ENCODE measurements at regions of chr3 and their contacts with region 1.

Region 1: GRCh38 chr3:186821429-186822367 is 15.4 kb upstream of the RFC4 start:
- DNase-seq: peak; percentile 61
- H3K4me3 ChIP-seq: peak overlapping the region in 2 of 3 experiments; percentile 21 to 58
- H3K27ac ChIP-seq: no peak overlapping the region
- H3K4me1 ChIP-seq: peaks cover 9% of the 10 kb centered on the region
- H3K27me3 ChIP-seq: no peaks in the 10 kb centered on the region
- CTCF ChIP-seq: peak; percentile 52 to 63
- POLR2A ChIP-seq: no peak

Region 2: GRCh38 chr3:186570096-186570940 is 251.4 kb before region 1 on chr3 and contains the start of gene DNAJB11:
- CTCF ChIA-PET with region 1: interaction called, 5 read pairs
- POLR2A ChIA-PET with region 1: no interaction called
- dilution Hi-C with region 1: no loop called
- intact Hi-C with region 1: loop called (anchors 5 kb)
- DNase-seq: peak; percentile 100
- H3K4me3 ChIP-seq: peak within 1 kb of the TSS; percentile 80 to 91 (median 90)
- H3K27ac ChIP-seq: peak within 1 kb of the TSS; percentile 67
- H3K4me1 ChIP-seq: peaks cover 18% of the 10 kb centered on the region
- H3K27me3 ChIP-seq: no peaks in the 10 kb centered on the region
- CTCF ChIP-seq: no peak
- POLR2A ChIP-seq: peak; percentile 87
- total RNA-seq, gene DNAJB11: 87.6 and 100 TPM in 2 replicates

Region 3: DNA sequence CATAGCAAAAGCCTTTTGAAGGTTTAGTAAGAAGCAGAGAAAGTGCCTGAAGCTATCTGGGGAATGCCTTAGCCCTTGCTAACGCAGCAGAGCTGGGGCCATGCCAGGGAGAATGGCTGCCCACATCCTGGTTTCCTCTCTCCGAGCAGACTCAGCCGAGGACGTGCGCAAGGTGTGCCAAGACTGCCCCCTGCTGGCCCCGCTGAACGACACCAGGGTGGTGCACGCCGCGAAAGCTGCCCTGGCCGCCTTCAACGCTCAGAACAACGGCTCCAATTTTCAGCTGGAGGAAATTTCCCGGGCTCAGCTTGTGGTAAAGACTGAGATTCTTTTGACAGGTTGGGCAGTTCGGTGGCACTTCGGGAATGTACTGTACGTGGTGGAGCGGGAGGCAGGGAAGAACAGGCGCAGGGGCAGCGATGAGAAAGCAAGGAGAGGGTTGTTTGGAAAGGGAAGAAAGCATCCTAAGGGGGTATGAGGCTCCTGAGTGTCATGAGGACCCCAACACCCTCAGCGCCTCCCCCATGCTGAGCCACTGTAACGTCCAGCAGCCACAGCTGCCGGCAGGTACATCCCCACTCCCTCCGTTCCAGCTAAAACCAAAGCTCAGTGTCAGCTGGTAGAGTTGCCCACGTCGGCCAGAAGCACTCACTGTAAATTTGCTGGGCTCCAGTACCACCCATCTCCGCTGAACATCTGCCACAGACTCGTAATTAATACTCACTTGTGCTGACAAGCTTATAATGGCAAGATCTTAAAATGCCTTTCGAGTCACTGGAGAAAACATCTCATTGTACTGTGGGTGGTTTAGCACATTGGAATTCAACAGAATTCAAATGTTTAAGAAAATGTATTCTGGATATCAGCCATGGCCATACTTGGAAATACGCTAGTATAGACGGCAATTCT is 204.4 kb before region 1 on chr3:
- CTCF ChIA-PET with region 1: interaction called, 195 read pairs
- POLR2A ChIA-PET with region 1: no interaction called
- dilution Hi-C with region 1: no loop called
- intact Hi-C with region 1: loop called (anchors 1 kb)
- DNase-seq: peak; percentile 83
- H3K4me3 ChIP-seq: no peak overlapping the region
- H3K27ac ChIP-seq: no peak overlapping the region
- H3K4me1 ChIP-seq: peaks cover 5% of the 10 kb centered on the region
- H3K27me3 ChIP-seq: peaks cover 4 to 19% of the 10 kb centered on the region in 2 experiments
- CTCF ChIP-seq: peak; percentile 98
- POLR2A ChIP-seq: no peak

Region 4: GRCh38 chr3:186783073-186783730 is 38.5 kb before region 1 on chr3 and contains the start of gene EIF4A2:
- CTCF ChIA-PET with region 1: interaction called, 5 read pairs
- POLR2A ChIA-PET with region 1: interaction called, 6 read pairs
- dilution Hi-C with region 1: no loop called
- intact Hi-C with region 1: loop called (anchors 2 kb)
- DNase-seq: peak; percentile 86
- H3K4me3 ChIP-seq: peak within 1 kb of the TSS; percentile 38 to 85 (median 72)
- H3K27ac ChIP-seq: peak within 1 kb of the TSS; percentile 93
- H3K4me1 ChIP-seq: peaks cover 26% of the 10 kb centered on the region
- H3K27me3 ChIP-seq: no peaks in the 10 kb centered on the region
- CTCF ChIP-seq: no peak
- POLR2A ChIP-seq: peak; percentile 99
- total RNA-seq, gene EIF4A2: 260 and 282 TPM in 2 replicates

Region 5: DNA sequence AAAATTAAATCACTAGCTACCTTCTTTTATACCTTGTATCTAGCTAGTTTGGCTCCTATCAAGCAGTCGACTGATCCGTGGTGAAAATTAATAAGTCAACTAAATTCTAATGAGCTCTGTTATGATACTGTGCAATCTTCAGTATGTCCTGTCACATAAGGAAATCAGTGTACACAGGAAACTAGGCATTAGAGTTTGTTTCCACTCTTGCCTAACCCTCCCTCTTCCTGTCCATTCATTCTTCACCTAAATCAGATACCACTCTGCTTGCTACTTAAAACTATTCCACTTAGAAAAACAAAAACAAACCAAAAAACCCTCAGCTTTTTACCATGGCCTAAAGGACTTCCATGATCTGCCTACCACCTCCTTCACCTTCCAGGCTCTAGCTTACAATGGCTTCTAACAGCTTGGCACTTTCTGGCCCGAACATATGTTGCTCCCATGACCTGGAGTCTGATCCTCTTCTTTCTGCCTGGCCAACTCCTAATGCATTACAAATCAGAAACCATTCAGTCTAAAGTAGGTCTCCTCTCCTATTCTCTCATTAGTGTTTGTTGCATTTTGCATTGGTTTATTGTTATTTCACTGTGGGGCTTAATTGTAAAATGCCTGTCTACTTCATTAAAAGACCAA is 23.3 kb before region 1 on chr3:
- CTCF ChIA-PET with region 1: interaction called, 13 read pairs
- POLR2A ChIA-PET with region 1: no interaction called
- dilution Hi-C with region 1: no loop called
- intact Hi-C with region 1: no loop called
- DNase-seq: peak; percentile 42
- H3K4me3 ChIP-seq: no peak overlapping the region
- H3K27ac ChIP-seq: no peak overlapping the region
- H3K4me1 ChIP-seq: peaks cover 12% of the 10 kb centered on the region
- H3K27me3 ChIP-seq: no peaks in the 10 kb centered on the region
- CTCF ChIP-seq: no peak
- POLR2A ChIP-seq: no peak

Region 6: GRCh38 chr3:186854954-186855353 is 33.3 kb after region 1 on chr3:
- CTCF ChIA-PET with region 1: no interaction called
- POLR2A ChIA-PET with region 1: no interaction called
- dilution Hi-C with region 1: no loop called
- intact Hi-C with region 1: no loop called
- DNase-seq: no peak
- H3K4me3 ChIP-seq: no peak overlapping the region
- H3K27ac ChIP-seq: no peak overlapping the region
- H3K4me1 ChIP-seq: no peaks in the 10 kb centered on the region
- H3K27me3 ChIP-seq: no peaks in the 10 kb centered on the region
- CTCF ChIP-seq: no peak
- POLR2A ChIP-seq: no peak

Region 7: DNA sequence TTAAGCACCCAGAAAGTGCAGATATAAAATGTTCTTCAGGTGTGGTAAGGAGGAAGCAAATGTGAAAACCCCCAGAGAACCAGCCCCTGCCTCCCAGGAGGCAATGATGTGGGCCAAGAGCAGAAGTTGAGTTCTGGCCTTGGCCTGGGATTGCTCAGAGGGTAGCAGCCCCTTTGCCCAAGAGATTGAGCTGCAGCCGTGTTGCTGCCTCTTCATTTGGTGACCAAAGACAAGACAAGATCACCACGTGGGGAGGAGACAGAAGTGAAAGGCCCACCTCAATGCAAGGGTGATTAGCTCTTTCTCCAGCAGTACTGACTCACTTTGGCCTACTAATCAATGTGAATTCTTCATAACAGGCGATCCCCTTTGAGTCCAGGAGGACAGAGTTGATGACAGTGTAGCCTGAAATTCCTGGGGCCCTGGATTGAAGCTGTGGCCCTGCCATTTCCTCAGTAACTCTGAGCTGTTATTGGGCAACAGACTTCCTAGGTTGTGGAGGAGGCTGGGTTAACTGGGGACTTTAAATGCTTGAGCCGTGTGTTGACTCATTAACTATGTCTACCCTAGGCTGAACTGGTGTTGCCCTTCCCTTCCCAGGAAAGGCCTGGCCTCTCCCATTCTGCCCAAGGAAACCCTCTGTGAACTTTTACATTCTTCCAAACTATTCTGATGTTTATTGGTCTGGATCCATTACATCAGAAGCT is 195.1 kb after region 1 on chr3:
- CTCF ChIA-PET with region 1: no interaction called
- POLR2A ChIA-PET with region 1: no interaction called
- dilution Hi-C with region 1: no loop called
- intact Hi-C with region 1: no loop called
- DNase-seq: peak; percentile 92
- H3K4me3 ChIP-seq: no peak overlapping the region
- H3K27ac ChIP-seq: peak overlapping the region; percentile 43
- H3K4me1 ChIP-seq: peaks cover 59% of the 10 kb centered on the region
- H3K27me3 ChIP-seq: no peaks in the 10 kb centered on the region
- CTCF ChIP-seq: no peak
- POLR2A ChIP-seq: peak; percentile 27

Region 8: GRCh38 chr3:187164885-187165543 is 343.3 kb after region 1 on chr3:
- CTCF ChIA-PET with region 1: interaction called, 25 read pairs
- POLR2A ChIA-PET with region 1: no interaction called
- dilution Hi-C with region 1: no loop called
- intact Hi-C with region 1: no loop called
- DNase-seq: peak; percentile 62
- H3K4me3 ChIP-seq: no peak overlapping the region
- H3K27ac ChIP-seq: no peak overlapping the region
- H3K4me1 ChIP-seq: no peaks in the 10 kb centered on the region
- H3K27me3 ChIP-seq: peaks cover 17 to 28% of the 10 kb centered on the region in 2 experiments
- CTCF ChIP-seq: peak; percentile 54 to 61
- POLR2A ChIP-seq: no peak

Measured in endothelial cell of umbilical vein (primary cell).